Activated CD4-positive, alpha-beta T cell treated with anti-CD3 and anti-CD28 coated beads, Interleukin-2, amount 10 ng/mL, durations not matched to agents 24 days and 14 days (primary cell): ENCODE measurements at regions of chr2 and their contacts with region 1.

Region 1: GRCh38 chr2:20282916-20283592 is 58.1 kb upstream of the SDC1 start:
- DNase-seq: no peak
- H3K4me3 Mint-ChIP-seq: no peak overlapping the region
- H3K27ac Mint-ChIP-seq: no peak overlapping the region
- H3K4me1 Mint-ChIP-seq: peaks cover 6% of the 10 kb centered on the region
- H3K27me3 Mint-ChIP-seq: no peaks in the 10 kb centered on the region

Region 2: DNA sequence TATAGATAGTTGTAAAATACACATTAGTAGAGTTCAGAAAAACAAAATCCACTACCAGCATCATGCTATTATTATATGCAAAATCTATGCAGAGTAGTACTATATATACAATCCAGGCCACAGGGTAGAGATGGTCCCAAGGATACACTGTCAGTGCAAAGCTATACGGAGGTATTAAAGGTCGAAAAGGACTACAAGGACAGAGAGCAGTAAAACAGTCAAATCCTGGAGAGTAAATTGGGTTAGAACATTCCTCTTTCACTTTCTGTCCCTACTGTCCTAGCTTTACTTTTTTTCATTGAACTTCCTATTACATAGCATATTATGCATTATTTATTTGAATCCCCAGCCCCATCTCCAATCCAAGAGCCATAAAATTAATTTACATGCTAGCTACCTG is 18.4 kb before region 1 on chr2:
- intact Hi-C with region 1: loop called (anchors 2 kb)
- DNase-seq: no peak
- H3K4me3 Mint-ChIP-seq: no peak overlapping the region
- H3K27ac Mint-ChIP-seq: no peak overlapping the region
- H3K4me1 Mint-ChIP-seq: peaks cover 8% of the 10 kb centered on the region
- H3K27me3 Mint-ChIP-seq: no peaks in the 10 kb centered on the region